GM10248 (cell line): ENCODE measurements at regions of chr19 and their contacts with region 1.

Region 1: DNA sequence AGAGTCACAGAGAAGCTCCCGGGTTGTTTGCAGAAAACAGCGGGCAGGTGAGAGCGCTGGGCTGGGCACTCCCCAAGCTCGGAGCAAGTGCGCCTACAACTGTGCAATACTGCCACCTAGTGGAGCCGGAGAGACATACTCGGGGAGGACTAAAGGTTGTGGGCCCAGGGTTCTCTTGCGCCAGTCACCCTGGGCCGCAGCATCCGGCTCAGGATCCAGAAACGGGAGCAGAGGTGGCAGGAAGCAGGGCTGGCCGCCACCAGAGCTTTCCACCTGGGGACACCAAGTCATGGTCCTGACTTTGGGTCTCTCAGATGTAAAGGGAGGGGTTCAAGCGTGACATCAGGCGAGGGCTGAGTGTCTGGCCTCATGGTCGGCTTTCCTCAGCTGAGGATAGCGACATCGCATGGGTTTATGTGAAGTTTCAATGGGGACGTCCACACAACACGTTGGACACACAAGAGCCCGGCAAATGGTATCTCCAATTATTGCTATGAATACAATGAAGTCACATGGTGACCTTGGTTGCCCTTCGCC is 11.2 kb upstream of the KLK4 start:
- DNase-seq: peak; percentile 89
- CTCF ChIP-seq: peak; percentile 89

Region 2: DNA sequence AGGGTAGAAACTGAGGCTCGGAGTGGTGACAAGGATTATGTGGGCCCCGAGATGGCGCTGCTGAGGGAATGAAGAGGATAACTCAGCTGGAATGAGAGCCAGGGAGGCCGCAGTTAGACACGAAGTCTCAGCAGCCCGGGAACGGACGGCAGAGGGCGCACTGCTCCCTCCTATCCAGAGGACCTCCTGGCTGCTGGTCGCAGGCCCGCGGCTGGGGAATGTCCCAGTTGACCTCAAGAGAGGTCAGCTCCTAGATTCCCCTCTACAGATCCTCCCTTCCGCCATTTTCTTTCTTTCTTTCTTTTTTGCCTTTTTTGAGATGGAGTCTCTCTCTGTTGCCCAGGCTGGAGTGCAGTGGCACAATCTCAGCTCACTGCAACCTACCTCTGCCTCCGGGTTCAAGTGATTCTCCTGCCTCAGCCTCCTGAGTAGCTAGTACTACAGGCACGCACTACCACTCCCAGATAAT is 384.6 kb before region 1 on chr19:
- CTCF ChIA-PET with region 1: interaction called, 25 read pairs
- POLR2A ChIA-PET with region 1: no interaction called
- DNase-seq: peak; percentile 84
- CTCF ChIP-seq: peak; percentile 82

Region 3: DNA sequence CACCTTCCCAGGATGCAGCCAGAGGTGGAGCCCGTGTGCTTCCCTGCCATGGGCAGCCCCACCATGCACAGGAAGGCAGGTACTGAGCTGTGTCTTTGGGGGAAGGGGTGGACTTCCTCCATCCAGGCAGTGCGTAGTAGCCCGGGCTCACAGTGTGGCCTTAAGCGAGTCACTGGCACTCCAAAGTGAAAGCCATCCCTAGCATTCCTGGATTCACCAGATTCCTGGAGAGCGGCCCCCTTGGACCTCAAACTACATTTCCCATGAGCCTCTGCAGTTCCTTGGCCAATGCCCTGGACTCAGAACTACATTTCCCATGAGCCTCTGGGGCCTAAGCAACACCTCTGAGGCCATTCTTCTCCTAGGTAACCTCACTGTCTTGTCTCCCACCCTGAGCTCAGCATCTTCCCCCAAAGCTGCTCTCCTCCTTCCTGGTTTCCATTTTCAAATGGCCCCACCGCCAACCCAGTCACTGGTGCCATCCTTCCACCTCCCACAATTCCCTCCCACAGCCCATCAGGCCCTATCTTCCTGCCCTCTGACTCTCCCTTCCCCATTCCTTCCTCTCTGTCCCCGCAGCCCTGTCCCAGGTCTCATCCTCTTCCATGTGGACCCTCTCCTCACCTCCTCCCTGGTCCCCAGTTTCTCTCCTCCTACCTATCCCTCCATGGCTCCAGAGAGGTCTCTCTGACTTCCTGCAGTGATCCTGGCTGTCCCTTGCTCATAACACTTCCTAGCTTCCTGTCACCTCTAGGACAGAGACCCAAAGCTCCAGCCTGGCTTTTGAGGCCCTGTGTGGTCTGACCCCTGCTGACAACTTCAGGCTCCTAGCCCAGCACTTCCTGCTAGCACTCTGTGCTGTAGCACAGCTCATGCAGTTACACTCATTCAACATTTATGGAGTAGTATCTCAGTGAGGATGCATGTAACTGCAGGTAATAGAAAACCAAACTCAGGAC is 272.7 kb before region 1 on chr19 and contains the start of gene C19orf81:
- CTCF ChIA-PET with region 1: no interaction called
- POLR2A ChIA-PET with region 1: no interaction called
- DNase-seq: no peak
- CTCF ChIP-seq: no peak

Region 4: DNA sequence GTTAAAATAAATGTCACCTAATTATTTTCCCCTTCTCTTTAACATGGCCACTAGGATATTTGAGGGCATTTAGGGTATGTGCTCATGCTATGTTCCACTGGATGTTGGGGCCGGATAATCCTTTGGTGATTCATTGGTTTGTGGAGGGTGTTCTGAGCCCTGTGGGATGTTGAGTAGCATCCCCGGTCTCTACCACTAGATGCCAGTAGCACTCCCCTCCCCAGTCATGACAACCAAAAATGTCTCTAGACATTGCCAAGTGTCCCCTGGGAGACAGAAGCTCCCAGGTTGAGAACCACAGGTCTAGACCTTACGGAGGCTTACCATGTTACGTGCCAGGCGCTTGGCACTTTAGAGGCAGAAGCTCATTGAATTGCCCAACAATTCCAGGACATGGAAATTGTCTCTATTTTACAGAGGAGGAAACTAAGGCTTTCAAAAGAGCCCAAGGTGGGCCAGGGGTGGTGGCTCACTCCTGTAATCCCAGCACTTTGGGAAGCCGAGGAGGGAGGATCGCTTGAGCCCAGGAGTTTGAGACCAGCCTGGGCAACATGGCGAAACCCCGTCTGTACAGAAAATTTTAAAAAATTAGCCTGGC is 216.9 kb before region 1 on chr19:
- CTCF ChIA-PET with region 1: interaction called, 17 read pairs
- POLR2A ChIA-PET with region 1: no interaction called
- DNase-seq: peak; percentile 76
- CTCF ChIP-seq: peak; percentile 59

Region 5: GRCh38 chr19:50804420-50805272 is 117.7 kb before region 1 on chr19:
- CTCF ChIA-PET with region 1: interaction called, 12 read pairs
- POLR2A ChIA-PET with region 1: interaction called, 3 read pairs
- DNase-seq: peak; percentile 98
- CTCF ChIP-seq: no peak

Region 6: GRCh38 chr19:50882183-50882582 is 40.2 kb before region 1 on chr19:
- CTCF ChIA-PET with region 1: interaction called, 14 read pairs
- POLR2A ChIA-PET with region 1: no interaction called
- DNase-seq: no peak
- CTCF ChIP-seq: peak; percentile 23

Region 7: GRCh38 chr19:50897191-50897607 is 25.2 kb before region 1 on chr19:
- CTCF ChIA-PET with region 1: interaction called, 14 read pairs
- POLR2A ChIA-PET with region 1: no interaction called
- DNase-seq: no peak
- CTCF ChIP-seq: no peak